ENCODE measurements at regions of chr19 and their contacts with region 1.

Region 1: DNA sequence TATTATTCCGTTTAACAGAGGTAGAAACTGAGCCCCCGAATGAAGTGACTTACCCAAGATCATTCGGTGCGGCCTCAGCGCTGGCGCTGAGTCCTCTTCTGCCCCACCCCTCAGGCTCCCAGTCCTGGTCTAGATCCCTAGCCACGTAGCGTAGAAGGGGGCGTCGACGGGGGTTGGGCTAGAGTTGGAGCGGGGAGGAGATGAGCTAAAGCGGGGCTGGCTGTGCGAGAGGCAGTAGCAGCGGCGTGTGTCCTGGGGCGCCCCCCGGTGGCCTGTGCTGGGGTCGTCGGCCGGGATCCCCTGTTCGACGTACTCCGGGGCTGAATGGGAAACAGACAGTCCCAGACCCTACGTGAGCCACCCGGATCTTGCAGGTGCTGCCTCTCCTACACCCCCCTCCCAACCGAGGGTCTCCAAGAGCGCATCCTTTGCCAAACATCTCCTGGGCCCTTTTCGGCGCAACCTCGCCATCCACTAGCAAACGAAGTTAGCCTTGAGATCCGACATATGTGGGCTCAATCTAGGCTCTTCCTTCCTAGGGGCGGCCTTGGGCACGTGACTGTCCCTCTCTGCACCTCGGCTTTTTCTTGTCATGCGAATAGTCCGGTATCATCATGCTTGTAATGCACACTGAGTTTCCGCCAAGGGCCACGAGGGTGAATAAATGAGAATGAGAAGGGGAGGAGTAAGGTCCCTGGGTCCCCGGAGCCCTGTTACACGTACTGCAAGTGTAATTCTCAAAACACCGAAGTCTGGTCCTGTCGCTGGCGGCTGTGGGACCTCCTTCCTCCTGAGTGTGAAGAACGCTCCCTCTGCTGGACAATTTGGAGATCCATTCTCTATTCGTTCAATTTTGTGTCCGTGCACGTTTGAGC is 47.7 kb downstream of the CYP4F22 start:
- DNase-seq: peak; percentile 93
- ATAC-seq: peak; percentile 96

Region 2: DNA sequence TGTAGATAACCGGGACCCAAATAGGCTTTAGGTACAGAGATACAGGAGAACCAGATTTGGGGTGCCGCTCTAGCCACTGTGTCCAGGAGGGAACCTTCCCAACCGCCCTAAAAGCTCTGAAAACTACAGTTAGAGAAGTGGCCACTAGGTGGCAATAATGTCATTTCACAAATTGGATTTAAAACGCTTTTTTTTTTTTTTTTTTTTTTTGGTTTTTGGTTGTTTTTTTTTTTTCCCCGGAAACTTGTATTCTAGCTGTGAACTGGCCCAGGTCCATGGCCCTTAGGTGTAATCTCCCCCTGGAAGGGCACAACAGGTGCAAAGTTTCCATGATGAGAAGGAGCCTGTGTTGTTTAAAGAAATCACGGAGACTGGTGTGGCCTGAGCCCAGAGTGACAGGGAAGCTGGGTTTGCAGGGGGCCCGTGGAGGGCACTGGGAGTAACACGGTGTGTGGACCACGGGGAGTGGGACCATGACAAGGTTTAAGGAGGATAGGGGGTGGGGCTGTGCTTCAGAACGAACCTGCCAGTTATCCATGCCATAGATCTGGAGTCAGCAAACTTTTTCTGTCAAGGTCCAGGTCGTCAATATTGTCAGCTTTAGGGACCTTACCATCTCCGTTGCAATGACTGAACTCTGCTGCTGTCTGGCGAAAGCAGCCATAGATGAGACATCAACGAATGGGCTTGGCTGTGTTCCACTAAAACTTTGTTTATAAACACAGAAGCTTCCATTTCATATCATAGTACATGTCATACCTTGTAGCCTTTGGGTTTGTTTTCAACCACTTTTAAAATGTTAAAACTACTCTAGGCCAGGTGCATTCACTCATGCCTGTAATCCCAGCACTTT is 463.9 kb before region 1 on chr19:
- intact Hi-C with region 1: loop called (anchors 5 kb)
- DNase-seq: no peak
- ATAC-seq: peak; percentile 41

Region 3: GRCh38 chr19:15177269-15178116 is 378.5 kb before region 1 on chr19:
- intact Hi-C with region 1: loop called (anchors 5 kb)
- DNase-seq: peak; percentile 90
- ATAC-seq: peak; percentile 91

Region 4: GRCh38 chr19:15264061-15264932 is 291.7 kb before region 1 on chr19:
- intact Hi-C with region 1: loop called (anchors 5 kb)
- DNase-seq: peak; percentile 88
- ATAC-seq: peak; percentile 52

Region 5: DNA sequence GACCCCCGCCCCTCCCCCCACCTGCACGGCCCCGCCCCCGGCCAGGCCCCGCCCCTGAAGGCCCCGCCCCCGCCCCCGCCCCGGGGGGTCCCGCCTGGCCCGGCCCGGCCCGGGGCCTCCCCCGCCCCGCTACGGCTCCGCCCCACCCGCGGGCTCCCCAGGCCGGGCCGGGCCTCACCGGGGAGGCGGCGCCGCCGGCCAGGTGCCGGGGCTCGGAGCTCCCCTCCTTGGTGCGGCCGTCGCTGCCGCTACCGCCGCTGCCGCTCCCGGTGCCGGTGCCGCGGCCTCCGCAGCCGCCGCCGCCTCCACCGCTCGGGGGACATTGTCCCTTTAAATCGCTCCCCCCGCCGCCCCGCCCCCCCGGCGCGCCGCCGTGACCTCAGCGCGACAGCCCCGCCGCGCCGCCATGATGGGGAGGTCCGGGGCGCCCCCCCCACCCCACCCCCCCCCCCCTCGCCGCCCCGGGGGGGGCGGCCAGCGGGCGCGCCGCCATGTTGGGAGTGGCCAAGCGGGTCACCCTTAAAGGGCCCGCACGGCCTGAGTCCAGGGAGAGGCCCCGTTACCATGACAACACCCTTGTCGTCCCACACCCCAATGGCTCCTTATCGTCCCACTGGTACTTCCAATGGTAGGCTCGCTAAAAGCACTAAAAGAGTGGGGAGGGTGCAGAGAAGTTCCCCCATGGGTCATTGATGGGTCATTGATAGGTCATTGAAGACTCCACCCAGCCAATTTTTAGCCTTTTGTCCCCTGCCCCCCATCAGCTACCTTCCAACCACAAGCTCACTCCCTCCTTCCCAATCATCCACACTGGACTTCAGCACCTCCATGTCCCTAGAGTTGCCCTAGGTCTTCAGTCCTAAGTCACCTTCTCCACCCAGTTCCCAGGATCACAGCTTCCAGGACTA is 106.1 kb before region 1 on chr19 and contains the start of gene WIZ:
- intact Hi-C with region 1: loop called (anchors 5 kb)
- DNase-seq: peak; percentile 93
- ATAC-seq: peak; percentile 19
- total RNA-seq, gene WIZ: 21.9 TPM

Measured in Right ventricle myocardium superior (tissue), 1 donor.